ENCODE measurements at regions of chr14 and their contacts with region 1.

Region 1: GRCh38 chr14:61444215-61444768 is 122.9 kb downstream of the PRKCH start:
- DNase-seq: peak; percentile 56 to 87 (median 63)
- H3K4me3 ChIP-seq: no peak overlapping the region
- H3K4me3 Mint-ChIP-seq: peak overlapping the region; percentile 58 to 87 (median 78)
- H3K27ac ChIP-seq: peak overlapping the region; percentile 44
- H3K27ac Mint-ChIP-seq: peak overlapping the region; percentile 89 to 97 (median 93)
- H3K4me1 ChIP-seq: peaks cover 98% of the 10 kb centered on the region
- H3K4me1 Mint-ChIP-seq: peaks cover 74 to 97% (median 87%) of the 10 kb centered on the region in 4 donors
- H3K27me3 ChIP-seq: no peaks in the 10 kb centered on the region
- H3K27me3 Mint-ChIP-seq: no peaks in the 10 kb centered on the region

Region 2: DNA sequence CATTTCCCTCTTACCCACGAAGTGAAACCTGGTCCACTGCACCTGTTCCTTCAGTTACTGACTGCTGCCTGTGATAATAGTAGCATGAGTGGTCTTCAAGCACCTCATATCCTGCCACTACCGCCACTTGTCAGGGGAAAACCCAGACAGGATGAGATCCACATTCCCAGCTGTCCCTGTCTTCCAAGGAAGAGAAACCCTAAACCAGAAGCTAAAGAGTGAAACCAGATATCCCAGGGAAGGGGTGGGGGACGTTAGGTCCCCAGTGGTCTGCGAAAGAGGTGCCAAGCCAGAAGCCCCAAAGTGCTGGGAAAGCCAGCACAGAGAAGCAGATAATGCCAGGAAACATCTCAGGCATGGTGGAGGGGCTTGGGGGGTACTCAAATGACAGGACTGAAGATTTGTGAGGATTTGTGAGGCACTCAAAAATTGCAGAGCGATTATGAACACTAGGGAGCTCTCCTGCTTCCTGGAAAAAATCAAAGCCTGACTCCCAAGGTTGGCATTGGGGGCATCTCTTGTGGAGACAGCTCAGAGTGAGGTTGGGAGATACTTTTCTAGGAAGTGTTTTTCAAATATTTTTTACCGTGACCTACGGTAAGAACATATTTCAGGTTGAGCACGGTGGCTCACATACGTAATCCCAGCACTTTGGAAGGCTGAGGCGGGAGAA is 241.1 kb before region 1 on chr14:
- CTCF ChIA-PET with region 1: no interaction called
- POLR2A ChIA-PET with region 1: no interaction called
- intact Hi-C with region 1: no loop called
- DNase-seq: no peak
- H3K4me3 ChIP-seq: no peak overlapping the region
- H3K4me3 Mint-ChIP-seq: no peak overlapping the region
- H3K27ac ChIP-seq: no peak overlapping the region
- H3K27ac Mint-ChIP-seq: no peak overlapping the region
- H3K4me1 ChIP-seq: no peaks in the 10 kb centered on the region
- H3K4me1 Mint-ChIP-seq: no peaks in the 10 kb centered on the region
- H3K27me3 ChIP-seq: peaks cover 10% of the 10 kb centered on the region
- H3K27me3 Mint-ChIP-seq: peaks cover 16 to 21% of the 10 kb centered on the region in 2 donors

Region 3: GRCh38 chr14:61388173-61388975 is 55.9 kb before region 1 on chr14:
- CTCF ChIA-PET with region 1: interaction called, 4 read pairs
- POLR2A ChIA-PET with region 1: no interaction called
- intact Hi-C with region 1: loop called (anchors 5 kb)
- DNase-seq: peak; percentile 50 to 69 (median 61)
- H3K4me3 ChIP-seq: peak overlapping the region in 1 of 2 donors; percentile 26
- H3K4me3 Mint-ChIP-seq: peak overlapping the region in 2 of 8 donors; percentile 72 to 78
- H3K27ac ChIP-seq: peak overlapping the region; percentile 65
- H3K27ac Mint-ChIP-seq: no peak overlapping the region
- H3K4me1 ChIP-seq: peaks cover 100% of the 10 kb centered on the region
- H3K4me1 Mint-ChIP-seq: peaks cover 0 to 50% (median 20%) of the 10 kb centered on the region in 4 donors
- H3K27me3 ChIP-seq: no peaks in the 10 kb centered on the region
- H3K27me3 Mint-ChIP-seq: no peaks in the 10 kb centered on the region

Region 4: DNA sequence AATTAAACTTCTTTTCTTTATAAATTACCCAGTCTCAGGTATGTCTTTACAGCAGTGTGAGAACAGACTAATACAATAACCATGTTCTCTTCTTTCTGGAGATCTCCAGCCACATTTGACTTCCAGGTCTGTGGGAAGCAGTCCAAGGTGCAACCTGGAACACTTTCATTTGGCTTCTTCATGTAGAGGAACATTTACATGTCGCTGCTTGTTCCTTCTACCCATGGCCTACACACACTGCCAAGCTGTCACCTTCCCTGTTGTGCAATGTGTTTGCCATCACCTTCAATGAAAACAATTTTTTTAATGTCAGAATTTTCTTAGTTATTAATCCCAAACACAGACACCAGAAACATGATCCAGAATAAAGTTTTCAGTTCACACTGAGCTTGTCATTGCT is 18.2 kb before region 1 on chr14:
- CTCF ChIA-PET with region 1: interaction called, 3 read pairs
- POLR2A ChIA-PET with region 1: no interaction called
- intact Hi-C with region 1: loop called (anchors 1 kb)
- DNase-seq: no peak
- H3K4me3 ChIP-seq: no peak overlapping the region
- H3K4me3 Mint-ChIP-seq: peak overlapping the region in 6 of 8 donors; percentile 4 to 76 (median 46)
- H3K27ac ChIP-seq: no peak overlapping the region
- H3K27ac Mint-ChIP-seq: peak overlapping the region in 6 of 7 donors; percentile 9 to 83 (median 66)
- H3K4me1 ChIP-seq: peaks cover 97% of the 10 kb centered on the region
- H3K4me1 Mint-ChIP-seq: peaks cover 61 to 75% (median 67%) of the 10 kb centered on the region in 4 donors
- H3K27me3 ChIP-seq: no peaks in the 10 kb centered on the region
- H3K27me3 Mint-ChIP-seq: no peaks in the 10 kb centered on the region

Region 5: DNA sequence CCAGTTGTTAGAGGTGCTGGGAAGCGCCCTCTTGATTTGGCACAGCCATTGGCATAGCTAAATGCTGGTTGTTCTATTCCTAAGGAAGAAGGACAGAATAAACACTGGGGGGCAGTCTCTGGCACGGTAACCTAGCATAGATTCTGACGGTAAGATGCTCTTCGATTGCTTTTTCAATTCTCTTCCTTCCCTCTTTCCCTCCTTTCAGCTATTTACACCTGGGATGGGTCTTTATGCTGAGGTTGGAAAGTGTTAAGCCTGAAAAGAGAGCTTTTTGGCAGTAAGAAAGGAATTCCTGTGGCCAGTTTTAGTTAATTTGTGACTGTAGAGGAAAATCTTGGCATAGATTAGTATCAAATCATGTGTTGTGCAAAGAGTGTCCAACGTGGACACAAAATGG is 480.8 kb after region 1 on chr14:
- CTCF ChIA-PET with region 1: no interaction called
- POLR2A ChIA-PET with region 1: no interaction called
- intact Hi-C with region 1: no loop called
- DNase-seq: no peak
- H3K4me3 ChIP-seq: no peak overlapping the region
- H3K4me3 Mint-ChIP-seq: no peak overlapping the region
- H3K27ac ChIP-seq: no peak overlapping the region
- H3K27ac Mint-ChIP-seq: no peak overlapping the region
- H3K4me1 ChIP-seq: no peaks in the 10 kb centered on the region
- H3K4me1 Mint-ChIP-seq: peaks cover 0 to 1% (median 0%) of the 10 kb centered on the region in 4 donors
- H3K27me3 ChIP-seq: no peaks in the 10 kb centered on the region
- H3K27me3 Mint-ChIP-seq: peaks cover 8 to 18% of the 10 kb centered on the region in 2 donors